Activated CD4-positive, alpha-beta T cell treated with anti-CD3 and anti-CD28 coated beads, Interleukin-2, amount 10 ng/mL, durations not matched to agents 24 days and 14 days (primary cell): ENCODE measurements at regions of chr5 and their contacts with region 1.

Region 1: GRCh38 chr5:56264417-56265025 is 31.4 kb upstream of the ANKRD55 start:
- DNase-seq: peak; percentile 70
- H3K4me3 Mint-ChIP-seq: no peak overlapping the region
- H3K27ac Mint-ChIP-seq: no peak overlapping the region
- H3K4me1 Mint-ChIP-seq: peaks cover 2% of the 10 kb centered on the region
- H3K27me3 Mint-ChIP-seq: peaks cover 18% of the 10 kb centered on the region

Region 2: DNA sequence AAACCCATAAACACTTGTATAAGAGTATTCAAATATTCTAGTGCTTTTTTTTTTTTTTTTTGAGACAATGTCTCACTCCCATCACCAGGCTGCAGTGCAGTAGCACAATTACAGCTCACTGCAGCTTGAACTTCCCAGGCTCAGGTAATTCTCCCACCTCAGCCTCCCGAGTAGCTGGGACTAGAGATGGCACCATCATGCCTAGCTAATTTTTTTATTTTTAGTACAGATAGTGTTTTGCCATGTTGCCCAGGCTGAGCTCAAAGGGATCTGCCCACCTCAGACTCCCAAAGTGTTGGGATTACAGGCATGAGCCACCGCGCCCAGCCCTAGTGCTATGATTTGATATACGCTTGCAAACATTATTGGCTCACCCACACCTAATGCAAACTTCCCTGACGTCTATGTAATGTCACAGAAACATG is 281.6 kb before region 1 on chr5:
- intact Hi-C with region 1: loop called (anchors 5 kb)
- DNase-seq: peak; percentile 73
- H3K4me3 Mint-ChIP-seq: peak overlapping the region; percentile 43
- H3K27ac Mint-ChIP-seq: peak overlapping the region; percentile 22
- H3K4me1 Mint-ChIP-seq: peaks cover 61% of the 10 kb centered on the region
- H3K27me3 Mint-ChIP-seq: no peaks in the 10 kb centered on the region